Activated CD4-positive, alpha-beta T cell treated with anti-CD3 and anti-CD28 coated beads for 36 hours (primary cell): ENCODE measurements at regions of chrX and their contacts with region 1.

Region 1: DNA sequence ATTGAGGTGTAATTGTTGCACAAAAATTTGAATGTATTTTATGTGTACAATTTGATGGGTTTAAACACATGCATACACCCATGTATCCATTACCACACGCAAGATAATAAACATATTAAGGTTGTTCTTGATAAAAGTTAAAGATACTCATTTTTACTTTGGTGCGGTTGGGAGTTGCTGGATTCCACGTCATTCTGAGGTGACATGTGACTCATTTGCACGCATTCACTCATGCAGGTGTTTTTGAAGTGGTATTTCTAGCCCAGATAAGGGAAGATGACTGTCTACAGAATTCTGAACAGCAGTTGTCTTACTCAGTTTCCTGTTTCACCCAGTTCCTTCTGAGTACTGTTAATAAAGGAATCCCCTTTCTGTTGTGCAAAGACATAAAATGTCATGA is 142.0 kb downstream of the RTL3 start:
- DNase-seq: peak; percentile 70
- ATAC-seq: peak; percentile 83
- H3K4me3 Mint-ChIP-seq: peak overlapping the region; percentile 23
- H3K27ac Mint-ChIP-seq: peak overlapping the region; percentile 84
- H3K4me1 Mint-ChIP-seq: peaks cover 48% of the 10 kb centered on the region
- H3K27me3 Mint-ChIP-seq: no peaks in the 10 kb centered on the region

Region 2: DNA sequence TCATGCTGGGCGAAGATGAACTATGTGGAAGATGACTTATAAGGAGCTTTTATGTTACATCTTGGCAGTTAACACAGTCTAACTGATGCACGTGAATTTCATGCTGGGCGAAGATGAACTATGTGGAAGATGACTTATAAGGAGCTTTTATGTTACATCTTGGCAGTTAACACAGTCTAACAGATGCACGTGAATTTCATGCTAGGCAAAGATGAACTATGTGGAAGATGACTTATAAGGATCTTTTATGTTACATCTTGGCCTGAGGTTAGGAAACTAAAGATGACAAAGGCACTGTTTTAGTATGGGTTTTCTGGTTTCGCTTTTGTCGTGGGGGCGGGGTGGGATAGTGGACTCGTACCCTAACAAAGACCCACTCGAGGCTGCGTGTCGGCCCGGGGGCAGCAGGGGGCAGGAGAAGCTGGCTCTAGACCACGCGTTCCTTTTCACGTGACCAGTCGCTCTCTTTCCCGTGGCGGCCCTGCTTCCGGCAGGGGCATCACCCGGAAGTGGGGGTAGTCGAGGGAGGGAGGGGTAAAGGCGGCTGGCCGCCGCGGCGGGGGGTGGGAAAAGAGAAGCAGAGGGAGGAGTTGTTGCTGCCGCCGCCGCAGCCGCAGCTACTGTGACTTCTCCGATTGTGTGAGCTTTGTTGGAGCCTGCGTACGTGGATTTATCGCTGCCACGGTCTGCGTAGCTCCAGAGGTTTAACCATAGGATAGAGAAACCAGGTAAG is 606.9 kb before region 1 on chrX and contains the start of gene ATP7A:
- CTCF ChIA-PET with region 1: no interaction called
- POLR2A ChIA-PET with region 1: no interaction called
- intact Hi-C with region 1: loop called in 1 of 2 experiments (anchors 5 kb)
- DNase-seq: peak; percentile 94
- ATAC-seq: peak; percentile 94
- H3K4me3 Mint-ChIP-seq: peak within 1 kb of the TSS; percentile 85
- H3K27ac Mint-ChIP-seq: peak within 1 kb of the TSS; percentile 99
- H3K4me1 Mint-ChIP-seq: peaks cover 13% of the 10 kb centered on the region
- H3K27me3 Mint-ChIP-seq: no peaks in the 10 kb centered on the region
- total RNA-seq, gene ATP7A: 9.5 to 9.7 TPM

Region 3: DNA sequence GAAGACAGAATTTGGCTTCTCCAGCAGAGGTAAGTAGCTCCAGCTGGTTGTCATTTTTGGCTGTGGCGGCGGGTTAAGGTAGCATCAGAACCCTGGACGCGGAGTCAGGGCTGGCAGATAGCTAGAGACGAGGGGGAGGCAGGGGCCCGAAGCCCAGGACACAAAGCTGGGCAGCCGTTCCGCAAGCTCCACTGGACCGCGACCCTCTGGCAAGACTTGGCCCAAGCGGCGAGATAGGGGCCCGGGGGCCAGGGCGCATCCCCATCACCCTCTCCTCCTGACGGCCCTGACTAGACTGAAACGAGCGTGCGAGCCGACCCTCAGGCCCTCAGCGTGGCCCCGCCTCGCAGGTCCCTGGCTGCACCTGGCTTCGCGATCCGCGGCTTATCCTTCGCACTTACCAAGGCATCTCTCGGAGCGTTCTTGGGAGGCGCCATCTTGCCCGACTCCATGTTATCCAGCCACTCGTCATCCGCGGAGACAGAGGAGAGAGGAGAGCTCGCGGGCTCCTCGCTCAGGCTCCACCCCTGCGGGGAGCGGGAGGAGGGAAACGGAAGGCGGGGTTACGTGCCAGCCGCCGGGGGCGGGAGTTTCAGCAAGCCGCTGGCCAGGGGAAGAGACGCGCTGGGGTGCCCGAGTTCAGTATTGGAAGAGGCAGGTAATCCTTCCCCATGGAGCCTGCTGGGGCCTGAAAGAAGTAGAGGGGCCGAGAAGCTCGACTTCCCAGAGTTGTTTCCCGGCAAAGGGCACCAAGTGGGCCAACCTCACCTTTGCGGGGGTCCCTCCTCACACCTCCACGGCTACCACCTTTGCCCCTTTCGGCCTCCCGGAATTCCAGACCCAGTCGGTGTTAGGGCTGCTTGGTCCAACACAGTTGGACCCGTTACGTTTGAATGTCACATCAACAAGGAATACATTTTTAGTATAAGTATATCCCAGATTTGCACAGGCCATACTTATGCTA is 377.7 kb before region 1 on chrX and contains the start of gene TAF9B:
- CTCF ChIA-PET with region 1: no interaction called
- POLR2A ChIA-PET with region 1: no interaction called
- intact Hi-C with region 1: loop called in 1 of 2 experiments (anchors 5 kb)
- DNase-seq: peak; percentile 90
- ATAC-seq: peak; percentile 95
- H3K4me3 Mint-ChIP-seq: peak within 1 kb of the TSS; percentile 84
- H3K27ac Mint-ChIP-seq: peak within 1 kb of the TSS; percentile 95
- H3K4me1 Mint-ChIP-seq: peaks cover 8% of the 10 kb centered on the region
- H3K27me3 Mint-ChIP-seq: no peaks in the 10 kb centered on the region
- total RNA-seq, gene TAF9B: 17.6 to 18.3 TPM

Region 4: GRCh38 chrX:78375894-78376293 is 141.2 kb before region 1 on chrX:
- CTCF ChIA-PET with region 1: no interaction called
- POLR2A ChIA-PET with region 1: no interaction called
- intact Hi-C with region 1: loop called (anchors 1 to 5 kb)
- DNase-seq: no peak
- ATAC-seq: peak; percentile 86
- H3K4me3 Mint-ChIP-seq: no peak overlapping the region
- H3K27ac Mint-ChIP-seq: no peak overlapping the region
- H3K4me1 Mint-ChIP-seq: peaks cover 17% of the 10 kb centered on the region
- H3K27me3 Mint-ChIP-seq: no peaks in the 10 kb centered on the region

Region 5: GRCh38 chrX:78387364-78387763 is 129.8 kb before region 1 on chrX:
- CTCF ChIA-PET with region 1: no interaction called
- POLR2A ChIA-PET with region 1: no interaction called
- intact Hi-C with region 1: no loop called
- DNase-seq: no peak
- ATAC-seq: no peak
- H3K4me3 Mint-ChIP-seq: no peak overlapping the region
- H3K27ac Mint-ChIP-seq: no peak overlapping the region
- H3K4me1 Mint-ChIP-seq: peaks cover 2% of the 10 kb centered on the region
- H3K27me3 Mint-ChIP-seq: no peaks in the 10 kb centered on the region

Region 6: GRCh38 chrX:78437621-78438020 is 79.5 kb before region 1 on chrX:
- CTCF ChIA-PET with region 1: no interaction called
- POLR2A ChIA-PET with region 1: no interaction called
- intact Hi-C with region 1: no loop called
- DNase-seq: no peak
- ATAC-seq: no peak
- H3K4me3 Mint-ChIP-seq: no peak overlapping the region
- H3K27ac Mint-ChIP-seq: no peak overlapping the region
- H3K4me1 Mint-ChIP-seq: no peaks in the 10 kb centered on the region
- H3K27me3 Mint-ChIP-seq: no peaks in the 10 kb centered on the region

Region 7: DNA sequence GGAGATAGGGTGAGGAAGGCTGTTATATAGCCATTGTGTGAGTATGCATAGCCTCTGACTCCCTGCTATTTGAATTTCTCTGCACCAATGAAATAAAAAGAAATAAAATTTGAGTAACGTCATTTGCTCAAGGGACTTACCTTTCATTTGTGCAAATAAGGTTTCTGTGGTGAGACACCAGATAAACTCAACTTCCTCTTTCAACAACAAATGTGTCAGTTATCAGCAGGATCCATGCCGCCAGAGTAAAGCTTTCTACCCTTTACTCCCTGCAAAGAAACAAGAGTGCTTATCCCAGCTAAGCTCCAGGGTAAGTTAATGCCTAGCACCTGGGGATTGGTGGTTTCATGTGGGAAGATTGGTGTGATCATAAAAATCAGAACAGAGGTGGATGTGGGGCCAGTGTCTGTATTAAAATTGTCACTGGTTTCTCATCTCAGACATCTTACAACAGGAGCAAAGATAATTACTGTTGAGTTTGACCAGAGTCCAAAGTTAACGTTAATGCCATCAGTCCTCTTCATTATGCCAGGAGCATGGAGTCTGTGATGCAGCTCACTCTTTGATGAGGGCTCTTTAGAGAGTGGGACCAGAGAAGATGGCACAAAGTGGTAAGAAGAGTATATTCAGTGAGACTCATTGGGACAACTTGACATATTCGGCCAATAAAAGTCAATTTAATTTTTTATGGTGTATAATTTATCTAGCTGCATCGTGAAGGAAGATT is 428.2 kb after region 1 on chrX and contains the start of gene P2RY10:
- CTCF ChIA-PET with region 1: no interaction called
- POLR2A ChIA-PET with region 1: no interaction called
- intact Hi-C with region 1: loop called (anchors 2 to 10 kb)
- DNase-seq: peak; percentile 35
- ATAC-seq: peak; percentile 79
- H3K4me3 Mint-ChIP-seq: peak within 1 kb of the TSS; percentile 90
- H3K27ac Mint-ChIP-seq: peak within 1 kb of the TSS; percentile 96
- H3K4me1 Mint-ChIP-seq: peaks cover 57% of the 10 kb centered on the region
- H3K27me3 Mint-ChIP-seq: no peaks in the 10 kb centered on the region
- total RNA-seq, gene P2RY10: 30.4 to 65.7 TPM

Region 8: DNA sequence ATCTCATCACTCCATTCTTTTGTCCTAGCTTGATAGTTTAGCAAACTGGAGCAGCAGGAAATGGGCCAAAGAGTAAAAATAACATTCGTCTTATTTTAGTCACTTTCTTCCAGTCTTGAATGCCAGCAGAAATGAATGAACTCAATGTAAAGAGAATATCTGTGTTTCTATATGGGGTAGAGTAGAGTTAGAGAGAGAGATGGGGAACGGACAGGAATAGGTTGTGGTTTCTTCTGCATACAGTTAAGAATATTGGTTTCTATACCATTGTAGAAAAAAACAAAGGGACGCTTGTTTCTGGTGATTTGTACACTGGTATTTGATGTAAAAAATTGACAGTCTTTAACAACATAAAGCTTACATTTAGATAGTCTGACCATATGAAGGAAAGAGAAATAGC is 636.2 kb after region 1 on chrX:
- CTCF ChIA-PET with region 1: no interaction called
- POLR2A ChIA-PET with region 1: no interaction called
- intact Hi-C with region 1: loop called (anchors 5 to 10 kb)
- DNase-seq: no peak
- ATAC-seq: no peak
- H3K4me3 Mint-ChIP-seq: peak overlapping the region; percentile 67
- H3K27ac Mint-ChIP-seq: peak overlapping the region; percentile 89
- H3K4me1 Mint-ChIP-seq: peaks cover 58% of the 10 kb centered on the region
- H3K27me3 Mint-ChIP-seq: no peaks in the 10 kb centered on the region